Colonic mucosa (tissue), 4 donors: ENCODE measurements at regions of chr3 and their contacts with region 1.

Region 1: DNA sequence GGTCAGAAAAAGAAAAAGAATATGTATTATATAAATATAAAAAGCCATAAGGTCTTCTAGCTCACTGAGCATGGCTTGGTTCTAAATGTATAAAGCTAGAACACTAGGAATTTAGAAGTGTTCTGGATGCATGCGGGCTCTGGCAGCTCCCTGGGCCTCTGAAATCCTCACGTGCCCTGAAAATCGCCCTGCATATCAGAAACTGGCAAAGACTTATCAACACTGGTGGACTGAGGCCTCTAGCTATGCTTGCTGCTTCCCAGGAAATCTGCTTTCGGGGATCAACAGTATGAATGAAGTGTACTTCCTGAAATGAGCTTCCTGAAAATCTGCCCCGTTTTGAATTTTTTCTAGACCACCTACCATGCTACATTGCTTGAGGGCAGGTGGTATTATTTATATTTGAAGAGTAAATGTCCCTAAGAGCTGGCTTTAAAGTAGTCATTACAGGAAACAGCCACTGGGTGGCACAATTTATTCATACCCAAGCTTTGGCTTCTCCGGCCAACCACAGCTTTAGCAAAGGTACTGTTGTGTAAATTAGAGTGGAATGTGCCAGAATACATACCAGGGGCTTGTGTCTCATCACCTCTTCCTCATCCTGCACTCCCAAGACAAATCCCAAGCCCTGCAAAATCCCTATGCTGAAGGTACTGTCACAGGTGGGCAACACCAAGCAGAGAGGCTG is 17.7 kb downstream of the CRTAP start:
- DNase-seq: peak; percentile 42
- H3K4me3 ChIP-seq: no peak overlapping the region
- H3K27ac ChIP-seq: no peak overlapping the region
- H3K4me1 ChIP-seq: no peaks in the 10 kb centered on the region
- H3K27me3 ChIP-seq: no peaks in the 10 kb centered on the region
- CTCF ChIP-seq: peak; percentile 68

Region 2: DNA sequence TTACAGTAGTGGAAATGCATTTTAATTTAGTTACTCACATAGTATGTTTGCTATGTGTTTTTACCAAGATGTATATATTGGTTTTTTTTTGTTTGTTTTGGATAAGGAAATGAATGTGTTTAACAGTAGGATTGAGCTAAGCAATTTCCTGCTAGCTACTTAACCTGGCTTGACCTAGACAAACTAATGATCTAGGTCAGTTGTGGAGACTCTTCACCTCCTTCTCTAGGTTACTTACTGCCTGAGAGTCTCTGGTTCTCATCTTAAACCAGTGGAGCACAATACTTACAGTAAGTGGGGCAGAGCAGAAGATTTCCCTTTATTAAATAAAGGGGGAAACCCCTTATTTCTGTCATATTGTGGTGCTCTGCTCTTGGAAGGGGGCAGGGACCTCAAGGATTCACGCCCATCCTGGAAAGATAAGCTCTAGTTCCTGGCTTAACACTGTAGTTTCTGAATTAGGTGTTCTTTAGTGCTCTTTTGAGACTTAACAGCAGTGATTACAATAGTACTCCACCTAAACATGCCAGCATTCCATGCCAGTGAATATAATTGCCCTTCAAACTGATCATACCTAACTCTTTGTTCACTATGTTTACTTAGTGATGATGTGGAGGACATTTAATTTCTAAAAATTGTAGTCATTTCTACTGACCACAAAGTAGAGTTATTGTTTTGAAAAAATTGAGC is 228.8 kb after region 1 on chr3:
- intact Hi-C with region 1: no loop called
- DNase-seq: no peak
- H3K4me3 ChIP-seq: no peak overlapping the region
- H3K27ac ChIP-seq: no peak overlapping the region
- H3K4me1 ChIP-seq: no peaks in the 10 kb centered on the region
- H3K27me3 ChIP-seq: no peaks in the 10 kb centered on the region
- CTCF ChIP-seq: no peak

Region 3: GRCh38 chr3:33372218-33373081 is 241.0 kb after region 1 on chr3:
- intact Hi-C with region 1: loop called (anchors 2 kb)
- DNase-seq: peak; percentile 45
- H3K4me3 ChIP-seq: no peak overlapping the region
- H3K27ac ChIP-seq: no peak overlapping the region
- H3K4me1 ChIP-seq: no peaks in the 10 kb centered on the region
- H3K27me3 ChIP-seq: no peaks in the 10 kb centered on the region
- CTCF ChIP-seq: peak; percentile 89

Region 4: DNA sequence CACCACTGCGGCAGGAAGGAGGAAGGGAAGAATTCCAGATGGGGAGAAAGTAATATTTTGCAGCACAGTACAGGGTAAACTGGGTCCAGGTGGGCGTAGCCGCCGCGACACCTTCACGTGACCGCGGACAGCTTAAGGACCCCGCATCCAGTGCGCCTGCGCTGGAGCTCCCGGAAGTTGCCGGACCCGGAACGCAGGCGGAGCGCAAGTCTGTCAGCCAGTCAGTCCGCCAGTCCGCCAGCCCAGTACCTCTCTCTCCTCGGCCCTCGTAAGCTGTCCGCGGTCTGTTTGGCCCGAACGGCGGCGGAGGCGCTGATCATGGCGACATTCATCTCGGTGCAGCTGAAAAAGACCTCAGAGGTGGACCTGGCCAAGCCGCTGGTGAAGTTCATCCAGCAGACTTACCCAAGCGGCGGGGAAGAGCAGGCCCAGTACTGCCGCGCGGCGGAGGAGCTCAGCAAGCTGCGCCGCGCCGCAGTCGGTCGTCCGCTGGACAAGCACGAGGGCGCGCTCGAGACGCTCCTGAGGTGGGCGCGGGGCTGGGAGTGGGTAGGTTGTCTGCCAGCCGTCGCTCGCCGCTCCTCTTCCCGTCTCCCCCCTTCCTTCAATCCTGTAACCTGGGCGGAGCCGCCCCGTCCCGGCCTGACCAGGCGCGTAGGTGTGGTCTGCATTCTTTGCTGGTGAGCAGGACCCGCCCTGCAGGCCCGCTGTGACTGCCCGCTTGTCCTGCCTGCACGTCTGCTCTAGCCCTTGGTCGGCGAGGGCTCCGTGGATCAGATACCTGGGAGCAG is 667.1 kb after region 1 on chr3 and contains the start of gene PDCD6IP:
- intact Hi-C with region 1: loop called (anchors 10 kb)
- DNase-seq: peak; percentile 94
- H3K4me3 ChIP-seq: peak within 1 kb of the TSS; percentile 86
- H3K27ac ChIP-seq: peak within 1 kb of the TSS; percentile 98
- H3K4me1 ChIP-seq: no peaks in the 10 kb centered on the region
- H3K27me3 ChIP-seq: no peaks in the 10 kb centered on the region
- CTCF ChIP-seq: no peak
- total RNA-seq, gene PDCD6IP: 388 to 492 TPM